ENCODE measurements at regions of chr7 and their contacts with region 1.

Region 1: GRCh38 chr7:98733036-98733435 is 116.0 kb downstream of the NPTX2 start:
- DNase-seq: peak in 1 of 5 donors; percentile 7
- H3K4me3 ChIP-seq: no peak overlapping the region
- H3K4me3 Mint-ChIP-seq: no peak overlapping the region
- H3K27ac ChIP-seq: no peak overlapping the region
- H3K27ac Mint-ChIP-seq: no peak overlapping the region
- H3K4me1 ChIP-seq: no peaks in the 10 kb centered on the region
- H3K4me1 Mint-ChIP-seq: no peaks in the 10 kb centered on the region
- H3K27me3 ChIP-seq: no peaks in the 10 kb centered on the region
- H3K27me3 Mint-ChIP-seq: peaks cover 4 to 7% of the 10 kb centered on the region in 2 donors

Region 2: DNA sequence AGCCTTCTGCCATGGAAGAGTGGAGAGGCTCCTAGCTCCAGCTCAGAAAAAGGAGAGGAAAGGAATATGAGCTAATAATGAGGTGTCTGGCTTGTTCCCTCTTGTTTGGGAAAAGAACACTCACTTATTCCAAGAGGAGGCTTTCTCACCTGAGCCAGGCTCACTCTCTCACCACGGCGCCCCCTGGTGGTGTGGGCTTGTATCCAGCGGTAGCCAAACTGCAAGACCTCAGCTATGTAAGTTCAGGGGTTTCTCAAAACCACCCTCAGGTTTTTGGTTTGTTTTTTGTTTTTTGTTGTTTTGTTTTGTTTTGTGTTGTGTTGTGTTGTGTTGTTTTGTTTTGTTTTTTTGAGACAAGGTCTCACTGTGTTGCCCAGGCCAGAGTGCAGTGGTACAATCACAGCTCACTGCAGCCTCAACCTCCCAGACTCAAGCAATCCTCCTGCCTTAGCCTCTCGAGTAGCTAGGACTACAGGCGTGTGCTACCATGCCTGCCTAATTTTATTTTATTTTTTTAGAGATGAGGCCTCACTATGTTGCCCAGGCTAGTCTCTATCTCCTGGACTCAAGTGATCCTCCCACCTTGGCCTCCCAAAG is 12.8 kb after region 1 on chr7:
- CTCF ChIA-PET with region 1: interaction called, 14 read pairs
- POLR2A ChIA-PET with region 1: no interaction called
- intact Hi-C with region 1: no loop called
- DNase-seq: peak; percentile 38 to 49 (median 45)
- H3K4me3 ChIP-seq: no peak overlapping the region
- H3K4me3 Mint-ChIP-seq: no peak overlapping the region
- H3K27ac ChIP-seq: no peak overlapping the region
- H3K27ac Mint-ChIP-seq: no peak overlapping the region
- H3K4me1 ChIP-seq: no peaks in the 10 kb centered on the region
- H3K4me1 Mint-ChIP-seq: no peaks in the 10 kb centered on the region
- H3K27me3 ChIP-seq: no peaks in the 10 kb centered on the region
- H3K27me3 Mint-ChIP-seq: peaks cover 3 to 11% of the 10 kb centered on the region in 2 donors